ENCODE measurements at regions of chr13 and their contacts with region 1.

Region 1: GRCh38 chr13:46288570-46289259 is 77.0 kb downstream of the LRRC63 start:
- DNase-seq: no peak
- ATAC-seq: peak; percentile 88
- H3K4me3 Mint-ChIP-seq: no peak overlapping the region
- H3K27ac Mint-ChIP-seq: no peak overlapping the region
- H3K4me1 Mint-ChIP-seq: peaks cover 12% of the 10 kb centered on the region
- H3K27me3 Mint-ChIP-seq: no peaks in the 10 kb centered on the region
- CTCF ChIP-seq: peak; percentile 94

Region 2: GRCh38 chr13:46278474-46278873 is 10.2 kb before region 1 on chr13:
- CTCF ChIA-PET with region 1: interaction called, 20 read pairs
- POLR2A ChIA-PET with region 1: no interaction called
- intact Hi-C with region 1: no loop called
- DNase-seq: no peak
- ATAC-seq: peak; percentile 60
- H3K4me3 Mint-ChIP-seq: no peak overlapping the region
- H3K27ac Mint-ChIP-seq: no peak overlapping the region
- H3K4me1 Mint-ChIP-seq: peaks cover 5% of the 10 kb centered on the region
- H3K27me3 Mint-ChIP-seq: no peaks in the 10 kb centered on the region
- CTCF ChIP-seq: no peak

Region 3: DNA sequence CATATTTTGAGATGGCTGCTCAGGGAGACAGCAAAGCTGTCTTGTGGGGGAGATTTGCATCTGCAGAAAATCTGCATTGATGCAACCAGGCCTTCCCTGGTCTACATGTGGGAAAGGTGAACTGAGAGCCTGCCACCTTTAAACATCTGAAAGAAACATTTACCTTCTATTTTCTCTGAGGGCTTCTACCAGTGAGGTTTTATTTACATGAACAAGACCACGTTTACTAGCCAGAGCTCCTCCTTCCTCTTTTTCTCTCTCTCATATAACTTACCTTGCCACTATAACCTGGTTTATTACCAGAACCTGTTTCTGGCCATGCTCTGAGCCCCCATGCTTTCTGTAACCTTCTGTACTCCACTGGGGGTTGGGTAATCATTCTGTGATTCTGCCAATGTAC is 112.7 kb after region 1 on chr13:
- CTCF ChIA-PET with region 1: no interaction called
- POLR2A ChIA-PET with region 1: no interaction called
- intact Hi-C with region 1: no loop called
- DNase-seq: no peak
- ATAC-seq: no peak
- H3K4me3 Mint-ChIP-seq: no peak overlapping the region
- H3K27ac Mint-ChIP-seq: no peak overlapping the region
- H3K4me1 Mint-ChIP-seq: peaks cover 7% of the 10 kb centered on the region
- H3K27me3 Mint-ChIP-seq: no peaks in the 10 kb centered on the region
- CTCF ChIP-seq: no peak